Mammary epithelial cell (primary cell): ENCODE measurements at regions of chr19 and their contacts with region 1.

Region 1: DNA sequence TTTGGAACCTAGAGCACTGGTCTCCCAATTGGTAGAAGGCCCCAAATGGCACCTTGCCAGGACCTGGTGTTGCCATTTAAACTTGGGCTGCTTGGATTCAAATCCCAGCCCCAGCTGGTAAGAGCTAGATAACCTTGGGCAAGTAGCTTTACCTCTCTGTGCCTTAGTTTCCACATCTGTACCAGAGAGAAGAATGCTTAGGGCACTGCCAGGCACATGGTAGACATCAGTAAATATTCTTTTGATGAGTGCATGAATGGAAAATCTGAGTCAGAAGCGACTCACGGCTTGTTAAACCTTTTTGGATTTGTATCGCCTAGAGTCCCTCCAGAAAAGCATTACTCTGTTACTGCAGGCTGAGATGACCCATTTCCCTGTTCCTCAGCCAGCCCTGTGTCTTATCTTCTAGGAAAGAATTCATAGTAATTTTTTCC is 90.9 kb downstream of the SIPA1L3 start:
- DNase-seq: peak; percentile 91
- H3K4me3 ChIP-seq: no peak overlapping the region
- H3K27ac ChIP-seq: peak overlapping the region; percentile 57
- H3K4me1 ChIP-seq: peaks cover 31% of the 10 kb centered on the region
- H3K27me3 ChIP-seq: no peaks in the 10 kb centered on the region
- CTCF ChIP-seq: no peak

Region 2: DNA sequence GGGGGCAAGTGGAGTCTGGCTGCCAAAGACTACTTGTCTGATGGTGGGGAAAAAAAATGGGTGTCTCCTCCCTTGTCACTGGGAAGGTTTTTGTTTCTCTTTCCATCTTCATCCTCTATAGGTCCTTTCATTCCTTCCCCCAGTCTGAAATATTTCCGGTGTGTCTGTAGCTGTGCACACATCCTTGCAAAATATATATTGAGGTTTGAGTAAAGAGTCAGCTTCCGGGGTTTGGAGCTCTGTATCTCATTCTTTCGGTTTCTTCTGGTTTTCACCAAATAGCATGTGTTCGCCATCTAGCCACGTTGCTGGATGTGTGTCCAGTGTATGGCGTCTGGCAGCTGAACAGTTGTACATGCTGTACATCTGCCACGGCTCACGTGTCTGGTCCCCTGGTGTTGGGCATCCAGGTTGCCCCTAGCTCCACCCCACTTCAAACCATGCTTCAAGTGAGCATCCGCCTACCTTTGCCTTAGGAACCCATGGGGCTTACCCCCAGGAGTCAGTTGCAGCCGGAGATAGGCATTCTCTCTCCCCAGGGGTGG is 51.2 kb after region 1 on chr19:
- CTCF ChIA-PET with region 1: no interaction called
- dilution Hi-C with region 1: loop called (anchors 5 kb)
- in situ Hi-C with region 1: no loop called
- intact Hi-C with region 1: no loop called
- DNase-seq: no peak
- H3K4me3 ChIP-seq: no peak overlapping the region
- H3K27ac ChIP-seq: no peak overlapping the region
- H3K4me1 ChIP-seq: no peaks in the 10 kb centered on the region
- H3K27me3 ChIP-seq: no peaks in the 10 kb centered on the region
- CTCF ChIP-seq: no peak

Region 3: GRCh38 chr19:38089440-38089839 is 91.5 kb after region 1 on chr19:
- CTCF ChIA-PET with region 1: no interaction called
- dilution Hi-C with region 1: no loop called
- in situ Hi-C with region 1: no loop called
- intact Hi-C with region 1: no loop called
- DNase-seq: no peak
- H3K4me3 ChIP-seq: no peak overlapping the region
- H3K27ac ChIP-seq: no peak overlapping the region
- H3K4me1 ChIP-seq: no peaks in the 10 kb centered on the region
- H3K27me3 ChIP-seq: no peaks in the 10 kb centered on the region
- CTCF ChIP-seq: no peak

Region 4: GRCh38 chr19:38155453-38155852 is 157.5 kb after region 1 on chr19:
- CTCF ChIA-PET with region 1: no interaction called
- dilution Hi-C with region 1: no loop called
- in situ Hi-C with region 1: no loop called
- intact Hi-C with region 1: no loop called
- DNase-seq: peak; percentile 23
- H3K4me3 ChIP-seq: no peak overlapping the region
- H3K27ac ChIP-seq: no peak overlapping the region
- H3K4me1 ChIP-seq: no peaks in the 10 kb centered on the region
- H3K27me3 ChIP-seq: no peaks in the 10 kb centered on the region
- CTCF ChIP-seq: no peak

Region 5: DNA sequence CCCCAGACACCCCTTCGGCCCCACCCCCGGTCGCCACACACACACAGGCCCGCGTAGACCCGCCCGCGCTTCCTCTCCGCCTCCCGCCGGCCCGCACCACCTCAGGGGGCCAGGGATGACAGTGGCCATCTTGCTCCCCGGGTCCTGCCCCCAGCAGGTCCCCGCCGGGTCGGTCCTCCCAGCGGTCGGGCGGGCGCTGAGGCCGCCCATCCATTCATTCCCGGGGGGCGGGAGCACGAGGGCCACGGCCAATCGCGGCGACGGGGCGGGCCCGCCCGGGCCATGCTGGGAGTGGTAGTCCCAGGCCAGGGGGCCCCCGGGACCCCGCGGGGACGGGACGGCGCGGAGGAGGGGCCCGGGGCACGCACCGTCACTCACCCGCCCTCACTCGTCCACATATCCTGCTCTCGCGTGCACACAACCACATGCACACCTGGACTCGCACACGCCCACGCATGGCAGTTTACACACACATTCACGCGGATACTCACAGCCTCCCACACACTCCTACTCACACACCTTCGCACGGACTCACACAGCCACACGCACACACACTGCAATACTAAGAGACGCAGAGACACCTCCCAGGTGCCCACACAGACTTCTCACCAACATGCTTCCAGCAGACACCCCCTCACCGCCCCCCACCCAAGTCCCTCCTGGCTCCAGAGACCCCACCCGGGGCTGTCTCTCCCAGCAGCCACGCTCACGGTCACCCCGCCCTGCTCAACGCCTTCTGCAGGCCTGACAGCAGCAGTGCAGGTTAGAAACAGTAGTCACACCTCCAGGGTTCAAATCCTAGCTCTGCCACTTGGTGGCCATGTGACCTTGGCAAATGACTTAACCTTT is 226.3 kb after region 1 on chr19 and contains the start of gene DPF1:
- CTCF ChIA-PET with region 1: no interaction called
- dilution Hi-C with region 1: no loop called
- in situ Hi-C with region 1: no loop called
- intact Hi-C with region 1: loop called (anchors 10 kb)
- DNase-seq: peak; percentile 79
- H3K4me3 ChIP-seq: peak within 1 kb of the TSS; percentile 42 to 62 (median 59)
- H3K27ac ChIP-seq: no peak within 1 kb of the TSS
- H3K4me1 ChIP-seq: peaks cover 21% of the 10 kb centered on the region
- H3K27me3 ChIP-seq: peaks cover 12% of the 10 kb centered on the region
- CTCF ChIP-seq: peak; percentile 34 to 43
- total RNA-seq, gene DPF1: 3.0 to 6.2 TPM